Activated CD4-positive, alpha-beta T cell treated with anti-CD3 and anti-CD28 coated beads for 36 hours (primary cell): ENCODE measurements at regions of chr22 and their contacts with region 1.

Region 1: GRCh38 chr22:46150034-46150654 is at the start of gene PPARA:
- DNase-seq: peak; percentile 90
- ATAC-seq: peak; percentile 87
- H3K4me3 Mint-ChIP-seq: peak within 1 kb of the TSS; percentile 74
- H3K27ac Mint-ChIP-seq: no peak within 1 kb of the TSS
- H3K4me1 Mint-ChIP-seq: peaks cover 13% of the 10 kb centered on the region
- H3K27me3 Mint-ChIP-seq: peaks cover 7% of the 10 kb centered on the region
- total RNA-seq, gene PPARA: 6.2 to 8.9 TPM

Region 2: DNA sequence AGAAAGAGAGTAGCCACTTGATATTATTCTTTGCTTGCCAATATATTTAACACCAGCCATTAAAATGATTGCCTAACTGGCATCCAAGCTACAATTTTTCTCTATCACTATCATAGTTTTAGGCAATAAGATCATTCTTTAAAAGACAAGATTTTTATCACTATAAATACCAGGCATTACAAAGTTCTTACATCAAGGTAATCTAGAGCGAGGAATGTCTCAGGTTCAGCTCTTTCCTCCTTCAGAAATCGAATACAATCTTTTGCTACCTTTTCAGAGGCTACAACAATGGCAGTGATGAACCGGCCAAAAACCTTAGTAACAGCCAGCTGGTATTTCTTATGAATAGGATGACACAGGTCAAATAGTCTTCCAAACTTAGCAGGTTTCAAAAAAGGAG is 760.6 kb before region 1 on chr22:
- CTCF ChIA-PET with region 1: no interaction called
- POLR2A ChIA-PET with region 1: no interaction called
- intact Hi-C with region 1: no loop called
- DNase-seq: no peak
- ATAC-seq: no peak
- H3K4me3 Mint-ChIP-seq: no peak overlapping the region
- H3K27ac Mint-ChIP-seq: no peak overlapping the region
- H3K4me1 Mint-ChIP-seq: no peaks in the 10 kb centered on the region
- H3K27me3 Mint-ChIP-seq: no peaks in the 10 kb centered on the region

Region 3: GRCh38 chr22:45671768-45672563 is 478.2 kb before region 1 on chr22 and contains the start of gene ATXN10:
- CTCF ChIA-PET with region 1: no interaction called
- POLR2A ChIA-PET with region 1: no interaction called
- intact Hi-C with region 1: loop called in 1 of 2 experiments (anchors 2 kb)
- DNase-seq: peak; percentile 83
- ATAC-seq: peak; percentile 78
- H3K4me3 Mint-ChIP-seq: peak within 1 kb of the TSS; percentile 89
- H3K27ac Mint-ChIP-seq: peak within 1 kb of the TSS; percentile 87
- H3K4me1 Mint-ChIP-seq: peaks cover 33% of the 10 kb centered on the region
- H3K27me3 Mint-ChIP-seq: peaks cover 3% of the 10 kb centered on the region
- total RNA-seq, gene ATXN10: 87.1 to 101 TPM

Region 4: DNA sequence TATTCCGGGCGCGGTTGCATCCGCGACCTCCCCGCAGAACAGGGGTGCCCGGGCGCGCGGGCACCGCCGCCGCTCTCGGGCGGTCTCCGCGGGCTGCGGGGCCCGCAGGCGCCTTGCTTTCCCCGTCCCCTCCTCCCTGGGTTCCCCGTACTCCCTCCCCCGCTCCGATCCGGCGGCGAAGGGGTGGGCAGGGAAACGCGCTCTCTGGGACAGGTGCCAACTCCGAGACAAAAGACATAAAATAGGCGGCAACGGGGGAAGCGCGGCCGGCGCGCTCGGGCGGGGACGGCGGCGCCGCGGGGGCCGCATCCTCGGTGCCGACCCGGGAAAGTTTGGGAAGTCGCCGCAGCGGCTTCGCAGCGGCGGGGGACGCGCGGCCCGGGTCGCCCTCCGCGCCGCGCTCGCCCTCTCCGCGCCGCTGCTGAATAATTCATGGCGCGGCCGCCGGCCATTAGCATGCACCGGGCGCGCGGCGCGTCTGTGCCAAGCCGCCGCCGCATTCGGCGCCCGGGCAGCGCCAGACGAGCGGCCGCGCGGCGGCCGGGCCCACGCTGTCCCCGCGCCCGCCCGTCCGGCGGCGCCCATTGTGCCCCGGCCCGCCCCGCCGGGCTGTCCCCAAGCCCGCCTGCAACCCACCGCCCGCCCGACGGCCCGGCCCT is 78.6 kb before region 1 on chr22:
- CTCF ChIA-PET with region 1: no interaction called
- POLR2A ChIA-PET with region 1: no interaction called
- intact Hi-C with region 1: loop called in 1 of 2 experiments (anchors 1 kb)
- DNase-seq: peak; percentile 80
- ATAC-seq: peak; percentile 30
- H3K4me3 Mint-ChIP-seq: peak overlapping the region; percentile 74
- H3K27ac Mint-ChIP-seq: peak overlapping the region; percentile 69
- H3K4me1 Mint-ChIP-seq: peaks cover 40% of the 10 kb centered on the region
- H3K27me3 Mint-ChIP-seq: no peaks in the 10 kb centered on the region

Region 5: DNA sequence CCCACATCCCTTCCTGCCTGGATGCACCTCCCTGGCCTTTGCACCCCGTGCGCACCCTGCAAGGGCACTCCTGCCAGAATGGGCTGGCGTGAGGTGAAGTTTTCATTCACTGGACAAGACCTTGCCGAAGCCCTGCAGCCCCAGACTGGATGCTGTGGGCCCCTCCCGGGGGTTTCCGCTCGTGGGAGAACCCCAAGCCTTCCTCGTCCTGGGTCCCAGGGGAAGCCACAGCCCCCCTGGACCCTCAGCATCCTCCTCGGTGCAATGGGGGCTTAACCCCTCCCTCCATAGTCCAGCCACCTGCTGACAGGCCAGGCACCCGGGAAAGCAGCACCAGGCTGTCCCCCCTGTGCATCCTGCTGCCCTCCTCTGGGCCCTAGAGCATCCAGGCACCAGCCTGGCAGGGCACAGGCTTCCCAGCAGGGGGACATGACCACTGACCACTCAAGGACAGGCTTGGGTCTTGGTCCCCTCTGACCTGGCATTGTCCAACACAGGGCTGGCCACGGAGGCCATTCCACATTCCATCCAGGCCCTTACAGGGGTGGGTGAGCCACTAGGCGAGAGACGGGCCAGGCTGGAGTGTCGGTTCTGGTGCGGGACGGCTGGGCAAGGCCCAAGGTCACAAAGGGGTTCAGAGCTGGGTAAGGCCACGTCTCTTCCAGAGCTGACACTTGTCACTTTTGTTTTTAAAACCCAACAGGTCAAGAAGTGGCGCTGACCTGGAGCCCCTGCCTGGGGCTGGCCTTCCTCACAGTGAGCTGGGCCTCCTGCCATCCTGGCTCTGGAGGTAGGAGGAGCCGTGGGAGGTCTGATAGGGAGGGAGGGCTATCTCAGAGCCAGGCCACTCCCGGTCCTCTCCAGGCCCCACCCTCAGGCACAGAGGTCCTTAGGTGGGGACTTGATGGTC is 41.3 kb before region 1 on chr22:
- CTCF ChIA-PET with region 1: no interaction called
- POLR2A ChIA-PET with region 1: no interaction called
- intact Hi-C with region 1: no loop called
- DNase-seq: no peak
- ATAC-seq: no peak
- H3K4me3 Mint-ChIP-seq: no peak overlapping the region
- H3K27ac Mint-ChIP-seq: no peak overlapping the region
- H3K4me1 Mint-ChIP-seq: no peaks in the 10 kb centered on the region
- H3K27me3 Mint-ChIP-seq: no peaks in the 10 kb centered on the region

Region 6: DNA sequence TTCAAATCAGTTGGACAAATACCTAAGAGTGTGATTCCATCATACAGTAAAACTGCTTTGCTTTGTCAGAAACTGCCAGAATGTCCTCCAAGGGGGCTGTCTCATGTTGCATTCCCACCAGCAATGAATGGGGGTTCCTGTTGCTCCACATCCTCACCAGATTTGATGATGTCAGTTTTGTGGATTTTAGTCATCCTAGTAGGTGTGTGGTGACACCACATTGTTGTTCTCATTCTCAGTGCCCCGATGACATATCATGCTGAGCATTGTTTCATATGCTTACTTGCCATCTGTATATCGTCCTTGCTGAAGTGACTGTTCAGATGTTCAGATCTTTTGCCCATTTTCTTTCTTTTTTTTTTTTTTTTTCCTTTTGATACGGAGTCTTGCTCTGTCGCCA is 62.9 kb after region 1 on chr22:
- CTCF ChIA-PET with region 1: no interaction called
- POLR2A ChIA-PET with region 1: no interaction called
- intact Hi-C with region 1: loop called in 1 of 2 experiments (anchors 5 kb)
- DNase-seq: peak; percentile 30
- ATAC-seq: peak; percentile 91
- H3K4me3 Mint-ChIP-seq: no peak overlapping the region
- H3K27ac Mint-ChIP-seq: peak overlapping the region; percentile 19
- H3K4me1 Mint-ChIP-seq: peaks cover 4% of the 10 kb centered on the region
- H3K27me3 Mint-ChIP-seq: no peaks in the 10 kb centered on the region

Region 7: DNA sequence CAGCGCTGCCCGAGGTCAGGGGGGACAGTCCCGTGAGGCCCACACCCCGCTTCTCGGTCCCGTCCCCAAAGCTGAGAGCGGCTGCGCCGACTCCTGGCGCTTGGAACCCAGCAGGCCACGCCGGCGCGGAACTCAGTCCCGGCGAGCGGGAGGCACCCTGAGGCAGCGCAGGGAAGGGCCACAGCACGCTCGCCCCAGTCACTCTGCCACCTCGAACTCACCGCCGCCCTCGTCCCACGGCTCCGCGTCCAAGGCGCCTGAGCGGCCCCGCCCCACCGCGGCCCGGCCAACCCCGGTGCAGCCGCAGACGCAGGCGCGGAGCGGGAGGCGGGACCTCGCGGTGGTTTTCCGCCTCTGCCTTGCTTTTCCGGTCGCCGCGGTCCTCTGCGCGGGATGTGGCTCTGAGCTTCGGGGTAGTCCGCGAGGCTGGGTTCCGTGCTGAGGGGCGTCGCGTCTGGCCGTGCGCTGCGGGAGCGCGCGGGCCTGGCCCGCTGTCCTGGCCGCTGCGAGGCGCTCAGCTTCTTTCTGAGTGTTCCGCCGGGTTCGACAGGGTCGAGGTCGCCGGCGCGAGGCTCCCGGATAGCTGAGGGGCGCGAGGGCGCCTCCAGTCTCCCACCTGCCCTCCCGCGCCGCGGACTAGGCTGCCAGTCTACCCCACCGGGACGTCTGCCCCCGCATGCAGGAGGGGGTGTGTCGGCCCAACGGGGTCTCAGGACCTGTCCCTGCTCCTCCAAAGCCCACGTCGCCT is 100.1 kb after region 1 on chr22 and contains the start of gene CDPF1:
- CTCF ChIA-PET with region 1: interaction called, 3 read pairs
- POLR2A ChIA-PET with region 1: interaction called, 4 read pairs
- intact Hi-C with region 1: loop called (anchors 1 to 5 kb)
- DNase-seq: peak; percentile 96
- ATAC-seq: peak; percentile 92
- H3K4me3 Mint-ChIP-seq: peak within 1 kb of the TSS; percentile 79
- H3K27ac Mint-ChIP-seq: peak within 1 kb of the TSS; percentile 80
- H3K4me1 Mint-ChIP-seq: peaks cover 25% of the 10 kb centered on the region
- H3K27me3 Mint-ChIP-seq: no peaks in the 10 kb centered on the region
- total RNA-seq, gene CDPF1: 8.1 to 8.8 TPM

Region 8: DNA sequence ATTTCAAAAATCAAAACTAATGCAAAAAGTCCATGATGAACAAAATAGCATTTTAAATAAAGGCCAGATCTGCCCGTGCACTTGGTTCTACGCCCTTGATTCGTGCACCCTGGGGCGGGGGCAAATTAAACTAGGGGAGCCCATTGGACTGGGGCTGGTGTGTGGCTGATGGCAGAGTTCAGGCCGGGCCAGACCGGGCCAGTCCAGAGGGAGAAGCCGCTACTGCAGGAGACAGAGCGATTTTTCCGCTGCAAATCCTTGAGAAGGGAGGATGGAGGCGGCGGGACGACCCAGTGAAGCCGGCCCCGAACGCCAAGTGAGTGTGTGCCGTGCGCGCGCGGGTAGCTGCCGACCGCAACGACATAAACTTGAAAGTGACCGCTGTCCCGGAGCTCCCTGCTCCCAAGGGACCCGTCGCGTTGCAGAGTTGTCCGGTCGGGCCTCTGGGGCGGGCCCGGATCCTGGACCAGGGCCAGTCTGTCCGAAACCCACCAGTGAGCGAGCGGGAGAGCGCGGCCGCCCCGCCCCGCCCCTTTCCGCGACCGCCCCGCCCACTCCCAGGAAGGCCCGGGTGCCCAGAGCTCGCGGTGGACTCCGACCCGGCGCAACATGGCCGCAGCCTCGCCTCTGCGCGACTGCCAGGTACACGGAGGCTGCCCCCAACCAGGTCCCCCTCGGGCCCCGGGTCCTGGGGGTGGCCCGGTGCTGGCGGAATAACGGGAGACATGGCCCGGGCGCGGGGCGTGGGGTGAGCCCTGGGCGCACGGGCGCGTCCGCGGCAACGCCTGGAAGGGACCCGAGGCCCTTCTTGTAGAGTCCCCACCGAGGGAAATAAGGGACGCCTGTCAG is 117.5 kb after region 1 on chr22 and contains the start of gene TTC38:
- CTCF ChIA-PET with region 1: no interaction called
- POLR2A ChIA-PET with region 1: no interaction called
- intact Hi-C with region 1: loop called in 1 of 2 experiments (anchors 1 kb)
- DNase-seq: peak; percentile 61
- ATAC-seq: peak; percentile 85
- H3K4me3 Mint-ChIP-seq: peak within 1 kb of the TSS; percentile 80
- H3K27ac Mint-ChIP-seq: no peak within 1 kb of the TSS
- H3K4me1 Mint-ChIP-seq: peaks cover 11% of the 10 kb centered on the region
- H3K27me3 Mint-ChIP-seq: peaks cover 33% of the 10 kb centered on the region
- total RNA-seq, gene TTC38: 5.2 to 5.8 TPM

Region 9: DNA sequence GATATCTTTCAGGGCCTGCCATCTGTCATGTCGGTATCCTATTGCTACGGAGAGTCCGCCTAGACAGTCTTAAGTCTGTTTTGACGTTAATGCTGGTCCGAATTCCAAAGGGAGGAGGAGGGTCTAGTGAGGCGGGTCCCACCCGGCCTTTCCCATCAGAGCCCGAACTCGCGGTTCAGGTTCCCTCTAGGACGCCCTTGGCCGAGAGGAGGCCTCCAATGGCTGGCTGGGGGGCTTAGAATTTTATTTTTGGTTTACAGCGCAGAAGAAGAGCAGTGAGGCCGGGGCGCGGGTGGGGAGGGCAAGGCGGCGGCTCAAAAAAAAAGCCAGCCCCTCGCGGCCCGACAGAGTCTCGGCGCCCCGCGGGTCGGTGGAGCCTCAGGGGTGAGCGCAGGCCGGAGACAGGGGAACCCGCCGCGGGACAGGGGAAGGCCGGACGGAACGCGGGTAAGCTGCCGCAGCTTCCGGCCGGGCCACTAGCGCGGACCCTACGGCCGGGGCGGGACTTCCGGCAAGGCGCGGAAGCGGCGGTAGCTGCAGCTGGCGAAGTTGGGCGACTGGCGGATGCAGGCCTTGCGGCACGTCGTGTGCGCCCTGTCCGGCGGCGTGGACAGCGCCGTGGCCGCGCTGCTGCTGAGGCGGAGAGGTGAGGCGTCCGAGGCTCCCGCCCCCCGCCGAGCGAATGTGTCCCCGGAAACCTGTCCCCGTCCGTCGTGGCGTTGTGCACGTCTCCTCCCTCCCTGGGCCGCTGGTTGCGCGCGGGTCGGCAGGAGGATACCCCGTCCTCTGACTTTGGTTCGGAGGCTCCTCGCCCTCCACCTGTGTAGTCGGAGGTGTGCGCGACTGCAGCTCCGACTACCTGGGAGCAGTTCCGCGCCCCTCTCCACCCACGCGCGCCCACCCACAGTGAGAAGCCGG is 185.3 kb after region 1 on chr22 and contains the start of gene TRMU:
- CTCF ChIA-PET with region 1: no interaction called
- POLR2A ChIA-PET with region 1: no interaction called
- intact Hi-C with region 1: loop called in 1 of 2 experiments (anchors 1 kb)
- DNase-seq: peak; percentile 86
- ATAC-seq: peak; percentile 89
- H3K4me3 Mint-ChIP-seq: peak within 1 kb of the TSS; percentile 99
- H3K27ac Mint-ChIP-seq: peak within 1 kb of the TSS; percentile 94
- H3K4me1 Mint-ChIP-seq: peaks cover 35% of the 10 kb centered on the region
- H3K27me3 Mint-ChIP-seq: no peaks in the 10 kb centered on the region
- total RNA-seq, gene TRMU: 61.4 to 75.3 TPM

Region 10: DNA sequence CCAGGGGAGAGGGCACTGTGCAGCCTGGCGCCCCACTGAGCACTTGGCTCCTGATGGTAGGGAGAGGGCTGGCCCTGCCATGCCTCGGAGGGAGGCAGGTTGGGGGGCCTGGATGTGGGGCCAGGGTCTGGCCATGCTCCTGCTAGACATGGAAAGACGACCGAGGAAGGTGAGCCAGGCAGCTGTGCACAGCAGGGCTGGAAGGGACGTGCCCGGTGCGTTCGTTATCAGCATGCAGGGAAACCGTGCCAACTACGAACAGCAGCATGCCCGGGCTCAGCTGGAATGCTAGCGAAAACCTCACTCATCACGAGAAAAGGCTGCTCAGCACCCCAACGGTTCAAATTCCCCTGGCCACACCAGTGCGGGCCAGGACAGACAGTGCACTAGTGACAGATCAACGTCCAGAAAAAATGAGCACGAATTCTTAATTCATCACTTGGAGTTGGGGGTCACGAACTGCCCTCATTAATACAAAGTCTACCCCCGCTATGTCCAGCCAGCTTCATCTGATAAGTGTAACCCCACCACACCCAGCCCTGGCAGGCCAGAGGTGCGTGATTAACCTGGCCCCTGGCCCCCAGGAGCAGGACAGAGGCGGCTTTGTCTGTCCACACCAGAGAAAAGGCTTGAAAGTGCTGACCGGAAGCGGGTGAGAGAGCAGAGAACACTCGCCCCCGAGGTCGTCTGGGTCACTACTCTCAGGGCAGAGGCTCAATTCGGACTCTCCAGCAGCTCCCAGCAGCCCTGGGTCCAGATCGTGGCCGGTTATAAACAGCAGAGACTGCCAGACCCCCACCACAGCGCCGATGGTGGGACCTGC is 303.1 kb after region 1 on chr22:
- CTCF ChIA-PET with region 1: no interaction called
- POLR2A ChIA-PET with region 1: no interaction called
- intact Hi-C with region 1: no loop called
- DNase-seq: no peak
- ATAC-seq: no peak
- H3K4me3 Mint-ChIP-seq: no peak overlapping the region
- H3K27ac Mint-ChIP-seq: no peak overlapping the region
- H3K4me1 Mint-ChIP-seq: no peaks in the 10 kb centered on the region
- H3K27me3 Mint-ChIP-seq: no peaks in the 10 kb centered on the region